GM18951 (cell line): ENCODE measurements at regions of chrX and their contacts with region 1.

Region 1: DNA sequence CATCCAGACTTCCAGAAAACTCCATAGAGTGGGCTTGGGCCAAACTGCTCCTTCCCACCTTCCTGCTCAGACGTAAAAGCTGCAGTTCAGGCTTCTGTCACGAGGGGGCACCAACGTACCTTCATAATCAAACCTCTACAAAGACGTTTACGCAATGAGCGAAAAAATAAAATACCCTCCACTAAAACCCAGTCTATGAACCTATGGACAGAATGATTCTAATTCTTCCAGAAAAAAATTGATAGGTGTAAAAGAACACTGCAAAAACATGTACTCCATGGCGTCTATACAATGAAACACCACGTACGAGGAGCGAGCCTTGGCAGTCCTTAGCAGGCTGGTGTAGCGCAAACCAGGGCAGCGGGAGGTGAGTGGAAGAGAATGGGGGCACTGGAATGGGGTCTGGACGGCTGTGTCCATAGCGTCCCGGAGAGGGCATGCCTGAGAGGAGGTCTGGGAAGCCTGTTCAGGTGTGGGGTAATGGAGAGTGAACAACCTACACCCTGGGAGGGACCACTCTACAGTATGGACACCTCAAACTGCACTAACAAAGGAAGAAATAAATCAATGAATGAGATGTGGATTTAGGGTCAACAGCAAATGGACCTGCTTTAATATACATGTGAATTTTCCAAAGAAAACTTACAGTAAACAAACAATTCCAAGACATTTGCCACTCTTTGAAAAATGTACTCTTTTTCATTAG is 14.4 kb upstream of the RAB40A start:
- POLR2A ChIP-seq: no peak

Region 2: GRCh38 chrX:103817502-103817901 is 283.8 kb after region 1 on chrX:
- in situ Hi-C with region 1: loop called (anchors 25 kb)
- POLR2A ChIP-seq: no peak